Cardiac septum (tissue), 1 donor: ENCODE measurements at regions of chr21 and their contacts with region 1.

Region 1: GRCh38 chr21:44785620-44786335 is 15.8 kb downstream of the UBE2G2 start:
- DNase-seq: no peak

Region 2: DNA sequence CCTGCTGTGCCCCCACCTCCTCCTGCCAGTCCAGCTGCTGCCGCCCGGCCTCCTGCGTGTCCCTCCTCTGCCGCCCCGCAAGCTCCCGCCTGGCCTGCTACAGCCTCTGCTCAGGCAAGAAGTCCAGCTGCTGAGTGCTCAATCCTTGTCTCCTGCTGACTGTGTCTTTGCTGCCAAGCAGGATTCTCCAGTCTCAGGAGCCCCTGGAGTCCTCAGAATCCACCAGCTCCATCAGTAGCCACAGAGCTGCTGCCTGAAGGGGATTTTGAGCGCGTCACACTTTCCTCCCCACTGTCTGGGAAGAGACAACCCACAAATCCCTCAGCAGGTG is 138.6 kb before region 1 on chr21:
- intact Hi-C with region 1: loop called (anchors 10 kb)
- DNase-seq: no peak